Posterior cingulate gyrus (tissue), 11 donors: ENCODE measurements at regions of chr1 and their contacts with region 1.

Region 1: GRCh38 chr1:228352677-228353481 is 53.8 kb downstream of the TRIM11 start:
- DNase-seq: peak in 4 of 10 donors; percentile 18 to 78 (median 65)

Region 2: DNA sequence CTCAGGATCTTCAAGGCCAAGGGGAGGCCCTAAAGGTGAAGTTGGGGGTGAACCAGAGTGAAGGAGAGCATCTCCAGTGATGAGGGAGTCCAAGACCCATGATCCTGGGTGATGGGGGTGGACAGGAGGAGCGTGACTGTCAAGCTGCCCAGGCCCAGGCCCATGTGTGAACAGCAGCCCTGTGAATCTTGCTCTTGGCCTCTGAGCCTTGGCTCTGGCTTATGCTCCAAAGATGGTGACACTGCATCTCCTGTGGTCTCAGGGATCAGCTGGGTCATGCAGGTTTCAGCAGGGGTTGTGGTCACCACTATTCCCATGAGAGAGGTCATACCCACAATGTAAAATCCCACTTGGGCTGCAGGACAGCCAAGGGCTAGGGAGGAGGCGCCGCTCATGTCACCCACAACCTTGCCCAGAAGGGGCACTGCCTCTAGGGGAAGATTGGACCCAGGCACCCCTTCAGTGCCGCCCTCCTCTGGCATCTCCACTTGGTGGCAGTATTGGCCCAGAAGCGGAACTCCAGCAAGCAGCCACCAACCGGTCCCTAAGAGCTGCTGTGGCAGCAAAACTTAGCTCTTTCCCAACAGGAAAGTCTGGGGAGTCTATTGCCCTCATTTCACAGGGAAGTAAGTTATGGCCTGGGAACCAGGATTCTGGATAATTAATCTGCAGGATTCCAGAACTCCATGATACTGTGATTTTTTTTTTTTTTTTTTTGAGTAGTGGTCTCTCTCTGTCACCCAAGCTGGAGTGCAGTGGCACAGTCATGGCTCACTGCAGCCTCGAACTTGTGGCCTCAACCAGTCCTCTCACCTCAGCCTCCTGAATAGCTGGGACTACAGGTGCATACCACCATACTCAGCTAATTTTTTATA is 353.6 kb before region 1 on chr1:
- intact Hi-C with region 1: no loop called
- DNase-seq: peak in 7 of 10 donors; percentile 19 to 88 (median 32)

Region 3: DNA sequence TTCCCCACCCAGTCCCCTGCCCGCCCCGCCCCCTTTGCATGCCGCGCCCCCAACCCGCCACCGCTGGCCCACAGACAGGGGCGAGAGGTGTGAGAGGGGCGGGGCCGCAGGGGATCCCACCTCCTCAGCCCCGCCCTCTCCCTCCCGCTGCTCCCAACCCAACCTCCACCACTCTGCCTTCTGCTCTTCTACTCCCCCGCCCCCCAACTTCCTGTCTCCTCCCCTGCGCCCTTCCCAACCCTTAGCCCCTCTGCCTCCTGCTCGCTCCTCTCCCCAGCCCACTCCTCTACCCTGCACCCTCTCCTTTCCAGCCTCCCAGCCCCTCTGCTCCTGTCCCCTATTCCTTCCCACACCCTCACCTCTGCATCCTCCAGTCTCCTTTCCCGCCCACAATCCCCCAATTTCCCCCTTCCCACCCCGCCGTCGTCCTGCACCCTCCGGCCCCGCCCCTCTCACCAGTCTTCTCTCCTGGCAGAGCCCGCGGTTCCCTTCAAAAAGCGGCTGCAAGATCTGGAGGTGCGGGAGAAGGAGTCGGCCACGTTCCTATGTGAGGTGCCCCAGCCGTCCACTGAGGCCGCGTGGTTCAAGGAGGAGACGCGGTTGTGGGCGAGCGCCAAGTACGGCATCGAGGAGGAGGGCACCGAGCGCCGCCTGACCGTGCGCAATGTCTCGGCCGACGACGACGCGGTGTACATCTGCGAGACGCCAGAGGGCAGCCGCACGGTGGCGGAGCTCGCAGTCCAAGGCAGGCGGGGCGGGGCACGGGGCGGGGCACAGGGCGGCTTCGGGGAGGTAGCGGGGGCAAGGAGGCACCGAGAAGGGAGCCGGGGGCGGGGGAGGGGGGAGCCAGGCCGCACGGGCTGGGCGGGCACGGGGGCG is 139.7 kb before region 1 on chr1:
- intact Hi-C with region 1: no loop called
- DNase-seq: peak in 9 of 10 donors; percentile 54 to 94 (median 74)

Region 4: GRCh38 chr1:228371294-228372182 is 18.7 kb after region 1 on chr1:
- intact Hi-C with region 1: loop called (anchors 1 kb)
- DNase-seq: peak in 4 of 10 donors; percentile 8 to 75 (median 65)